ENCODE measurements at regions of chr6 and their contacts with region 1.

Region 1: GRCh38 chr6:32244946-32245398 is 21.1 kb upstream of the NOTCH4 start:
- DNase-seq: peak; percentile 64 to 86
- ATAC-seq: peak; percentile 72 to 80 (median 79)
- H3K4me3 ChIP-seq: no peak overlapping the region
- H3K4me3 Mint-ChIP-seq: peak overlapping the region; percentile 71
- H3K27ac ChIP-seq: no peak overlapping the region
- H3K27ac Mint-ChIP-seq: peak overlapping the region in 1 of 2 donors; percentile 77
- H3K4me1 ChIP-seq: peaks cover 9% of the 10 kb centered on the region
- H3K4me1 Mint-ChIP-seq: peaks cover 8% of the 10 kb centered on the region in 2 donors
- H3K27me3 ChIP-seq: no peaks in the 10 kb centered on the region
- H3K27me3 Mint-ChIP-seq: peaks cover 0 to 2% of the 10 kb centered on the region in 2 donors
- CTCF ChIP-seq: peak; percentile 81

Region 2: DNA sequence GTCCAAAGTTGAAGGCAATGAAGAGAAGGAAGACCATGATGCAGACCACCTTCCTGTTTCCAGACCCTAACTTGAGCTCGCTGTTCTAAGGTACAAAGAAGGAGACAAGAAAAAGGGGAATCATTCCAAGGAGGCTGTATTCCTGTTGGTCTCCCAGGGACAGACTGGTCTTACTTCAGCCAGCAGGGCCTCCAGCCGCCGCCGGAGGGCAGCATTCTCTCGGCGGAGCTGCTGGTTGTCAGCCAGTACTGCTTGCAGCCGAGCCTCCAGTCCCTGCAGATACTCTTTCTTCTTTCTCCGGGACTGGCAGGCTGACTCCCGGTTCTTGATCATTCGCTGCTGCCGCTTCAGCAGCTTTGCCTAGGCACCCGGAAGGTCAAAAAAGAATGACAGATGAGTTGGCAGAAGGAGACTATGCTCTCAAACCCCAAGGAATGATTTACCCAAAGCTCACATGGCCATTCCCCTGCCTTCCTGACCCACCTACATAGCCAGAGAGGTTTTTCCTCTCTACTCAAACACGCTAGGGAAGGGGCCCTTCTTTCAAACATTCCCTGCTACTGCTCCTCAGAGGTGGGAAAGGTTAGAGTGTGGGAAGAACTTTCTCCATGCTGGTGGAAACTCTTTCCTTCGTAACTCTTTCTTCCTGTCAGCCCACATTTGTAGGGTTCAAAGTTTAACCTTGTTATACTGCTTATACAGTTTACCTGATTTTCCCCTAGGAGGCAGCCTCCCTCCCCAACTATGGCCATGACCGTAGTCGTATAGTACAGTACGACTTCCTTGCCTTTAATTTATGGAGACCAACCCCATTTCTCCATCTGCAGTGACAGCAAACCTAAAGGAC is 126.0 kb before region 1 on chr6:
- intact Hi-C with region 1: loop called (anchors 2 kb)
- DNase-seq: peak; percentile 64 to 79
- ATAC-seq: peak; percentile 83 to 93 (median 92)
- H3K4me3 ChIP-seq: no peak overlapping the region
- H3K4me3 Mint-ChIP-seq: no peak overlapping the region
- H3K27ac ChIP-seq: no peak overlapping the region
- H3K27ac Mint-ChIP-seq: peak overlapping the region; percentile 41 to 51
- H3K4me1 ChIP-seq: no peaks in the 10 kb centered on the region
- H3K4me1 Mint-ChIP-seq: peaks cover under 1 to 22% of the 10 kb centered on the region in 2 donors
- H3K27me3 ChIP-seq: no peaks in the 10 kb centered on the region
- H3K27me3 Mint-ChIP-seq: no peaks in the 10 kb centered on the region
- CTCF ChIP-seq: peak; percentile 79

Region 3: DNA sequence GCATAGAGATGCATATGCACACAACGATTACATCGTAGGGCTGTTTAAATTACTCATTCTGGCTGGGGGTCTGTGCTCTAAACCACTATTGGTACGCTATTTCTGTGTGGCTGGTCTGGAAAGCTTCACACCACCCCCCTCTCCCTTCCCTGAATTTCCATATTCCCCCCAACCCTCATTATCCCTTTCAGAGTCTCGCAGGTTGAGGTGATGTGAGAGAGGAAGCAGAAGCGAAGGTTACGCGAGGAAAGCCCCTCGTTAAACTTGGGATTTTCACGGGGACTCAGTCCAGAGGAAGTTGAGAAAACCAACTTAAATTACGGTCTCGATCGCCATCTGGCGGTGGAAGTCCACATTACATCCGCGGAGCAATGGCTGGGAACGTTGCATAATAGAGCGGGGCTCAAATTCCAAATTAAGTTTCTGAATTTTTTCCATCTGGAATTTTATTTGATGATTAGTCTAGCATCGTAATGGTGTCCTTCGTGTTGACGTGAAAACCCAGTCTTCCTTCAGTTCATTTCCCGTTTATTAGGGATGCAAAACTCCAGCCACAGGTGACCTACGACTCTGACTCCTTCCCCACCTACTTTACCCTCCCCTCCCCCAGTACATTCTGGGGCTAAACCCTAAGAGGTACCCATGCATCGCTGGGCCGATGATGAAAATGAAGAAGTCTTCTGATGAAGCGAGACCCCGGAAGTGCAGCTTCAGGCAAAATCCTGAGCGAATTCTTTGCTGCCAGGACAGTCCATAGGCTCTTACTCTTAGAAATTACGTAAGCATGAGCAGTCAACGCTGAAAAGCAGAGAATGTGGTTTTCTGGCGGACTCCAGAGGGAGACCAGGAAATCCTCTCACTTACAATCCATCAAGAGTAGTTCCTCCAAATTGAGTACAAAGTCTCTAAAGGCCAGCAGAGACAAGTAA is 552.1 kb after region 1 on chr6:
- intact Hi-C with region 1: loop called (anchors 2 kb)
- DNase-seq: peak; percentile 79 to 89
- ATAC-seq: peak; percentile 85 to 91 (median 88)
- H3K4me3 ChIP-seq: no peak overlapping the region
- H3K4me3 Mint-ChIP-seq: peak overlapping the region; percentile 18
- H3K27ac ChIP-seq: no peak overlapping the region
- H3K27ac Mint-ChIP-seq: peak overlapping the region in 1 of 2 donors; percentile 56
- H3K4me1 ChIP-seq: peaks cover 12% of the 10 kb centered on the region
- H3K4me1 Mint-ChIP-seq: peaks cover 0 to 11% of the 10 kb centered on the region in 2 donors
- H3K27me3 ChIP-seq: peaks cover 9% of the 10 kb centered on the region
- H3K27me3 Mint-ChIP-seq: peaks cover 43 to 70% of the 10 kb centered on the region in 2 donors
- CTCF ChIP-seq: peak; percentile 94

Measured in natural killer cell (primary cell).